SK-N-SH (cell line): ENCODE measurements at regions of chr11 and their contacts with region 1.

Region 1: GRCh38 chr11:130916238-130916855 is at the start of gene SNX19:
- DNase-seq: peak; percentile 97
- H3K4me3 ChIP-seq: peak within 1 kb of the TSS; percentile 90 to 96
- H3K27ac ChIP-seq: peak within 1 kb of the TSS; percentile 68 to 73; a peak in 3 of 4 replicates
- H3K4me1 ChIP-seq: peaks cover 9 to 18% of the 10 kb centered on the region in 2 experiments
- H3K27me3 ChIP-seq: no peaks in the 10 kb centered on the region
- CTCF ChIP-seq: peak; percentile 85
- EP300 ChIP-seq: peak in 1 of 2 experiments; percentile 29; a peak in 1 of 4 replicates
- RAD21 ChIP-seq: no peak
- polyA plus RNA-seq, gene SNX19: 16.6 and 21.9 TPM in 2 replicates

Region 2: GRCh38 chr11:130904380-130904779 is 12.0 kb before region 1 on chr11:
- CTCF ChIA-PET with region 1: interaction called, 20 read pairs
- POLR2A ChIA-PET with region 1: no interaction called
- DNase-seq: peak; percentile 14
- H3K4me3 ChIP-seq: no peak overlapping the region
- H3K27ac ChIP-seq: no peak overlapping the region; a peak in 1 of 4 replicates
- H3K4me1 ChIP-seq: peaks cover 0 to 7% of the 10 kb centered on the region in 2 experiments; a peak in 2 of 4 replicates
- H3K27me3 ChIP-seq: no peaks in the 10 kb centered on the region
- CTCF ChIP-seq: peak; percentile 48
- EP300 ChIP-seq: no peak
- RAD21 ChIP-seq: no peak

Region 3: GRCh38 chr11:130932086-130932712 is 15.9 kb after region 1 on chr11:
- CTCF ChIA-PET with region 1: interaction called, 10 read pairs
- POLR2A ChIA-PET with region 1: no interaction called
- DNase-seq: no peak
- H3K4me3 ChIP-seq: no peak overlapping the region
- H3K27ac ChIP-seq: no peak overlapping the region
- H3K4me1 ChIP-seq: no peaks in the 10 kb centered on the region
- H3K27me3 ChIP-seq: no peaks in the 10 kb centered on the region
- CTCF ChIP-seq: no peak
- EP300 ChIP-seq: no peak
- RAD21 ChIP-seq: no peak